ENCODE measurements at regions of chr17 and their contacts with region 1.

Region 1: DNA sequence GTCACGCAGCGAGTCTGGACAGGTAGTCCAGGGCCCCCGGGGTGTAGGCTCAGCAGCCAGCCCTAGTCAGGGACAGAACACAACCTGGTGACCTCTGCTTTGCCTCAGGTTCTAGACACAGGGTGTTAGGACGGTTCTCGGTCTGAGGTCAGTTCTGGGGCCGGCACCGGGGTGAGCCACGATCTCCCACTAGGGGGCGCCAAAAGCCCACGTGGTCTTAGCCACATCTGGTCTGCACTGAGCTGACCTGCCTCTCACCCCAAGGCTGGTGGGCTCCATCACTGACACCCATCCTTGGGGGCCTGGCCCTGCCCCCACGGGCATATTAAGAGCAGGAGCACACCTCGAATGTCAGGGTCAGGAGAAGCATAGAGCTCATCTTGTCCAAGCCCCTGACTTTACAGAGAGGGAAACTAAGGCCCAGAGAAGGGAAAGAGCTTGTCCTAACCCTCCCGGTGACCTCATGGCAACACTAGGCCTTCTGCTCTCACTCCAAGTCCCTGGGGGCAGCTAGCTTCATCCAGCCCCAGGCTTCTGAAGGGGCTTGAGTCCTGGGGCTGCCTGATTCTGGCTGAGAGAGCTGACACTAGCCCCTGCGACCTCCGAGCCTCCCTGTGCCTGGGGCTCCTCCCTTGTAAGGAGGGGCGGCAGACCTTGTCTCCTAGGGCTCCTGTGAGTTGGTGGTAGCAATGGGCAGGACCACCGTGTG is 9.0 kb downstream of the SLC5A10 start:
- DNase-seq: peak; percentile 49 to 64 (median 49)
- H3K4me3 ChIP-seq: no peak overlapping the region
- H3K27ac ChIP-seq: no peak overlapping the region
- H3K4me1 ChIP-seq: peaks cover 0 to 24% (median 16%) of the 10 kb centered on the region in 4 experiments
- H3K27me3 ChIP-seq: no peaks in the 10 kb centered on the region

Region 2: DNA sequence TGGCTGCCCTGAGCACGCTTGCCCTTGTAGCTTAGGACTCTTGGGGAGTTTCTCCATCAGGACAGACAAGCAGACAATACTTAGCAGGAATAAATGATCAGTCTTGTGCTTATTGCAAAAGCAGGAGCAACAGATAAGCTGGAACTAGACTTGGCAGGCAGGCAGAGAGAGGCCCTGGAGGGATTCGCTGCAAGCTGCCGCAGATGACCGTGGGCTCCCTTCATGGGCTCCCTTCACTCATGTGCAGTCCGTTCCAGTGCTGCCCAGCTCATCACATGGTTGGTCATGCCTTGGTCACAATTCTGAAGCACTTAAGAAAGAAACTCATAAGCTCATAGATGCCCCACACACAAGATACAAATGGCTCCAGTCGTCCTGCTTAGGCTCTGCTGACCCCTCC is 11.4 kb before region 1 on chr17:
- CTCF ChIA-PET with region 1: interaction called, 16 read pairs
- POLR2A ChIA-PET with region 1: no interaction called
- DNase-seq: no peak
- H3K4me3 ChIP-seq: no peak overlapping the region
- H3K27ac ChIP-seq: no peak overlapping the region
- H3K4me1 ChIP-seq: peaks cover 0 to 2% (median 0%) of the 10 kb centered on the region in 4 experiments
- H3K27me3 ChIP-seq: no peaks in the 10 kb centered on the region

Region 3: DNA sequence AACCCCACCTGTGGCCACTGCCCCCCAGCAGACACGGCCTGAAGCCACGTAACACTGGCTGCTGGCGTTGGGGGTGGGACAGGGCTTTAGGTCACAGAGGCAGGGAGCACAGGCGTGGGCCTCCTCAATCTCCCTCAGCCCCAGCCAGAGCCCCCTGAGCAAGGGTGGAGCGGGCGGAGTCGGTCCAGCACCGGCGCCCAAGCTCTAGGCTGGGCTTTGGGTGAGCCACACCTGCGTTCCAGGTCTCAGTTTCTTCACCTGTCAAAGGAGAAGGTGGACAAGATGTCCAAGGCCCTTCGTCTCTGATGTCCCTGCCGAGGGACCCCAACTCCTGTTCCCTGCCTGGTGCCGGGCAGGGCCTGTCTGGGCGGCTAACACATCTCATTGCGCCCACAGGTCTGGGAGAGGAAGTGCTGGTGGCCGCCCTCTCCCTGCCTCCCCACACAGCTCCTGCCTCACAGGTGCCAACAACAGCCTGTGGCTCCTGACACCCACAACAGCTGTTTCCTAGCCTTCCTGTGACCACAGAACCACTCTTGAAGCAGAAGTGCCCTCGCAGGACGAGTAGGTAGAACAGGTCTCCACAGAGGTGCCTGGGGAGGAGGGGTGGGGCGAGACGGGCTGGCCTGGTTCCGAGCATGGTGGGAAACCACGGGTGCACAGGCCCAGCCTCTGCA is 31.6 kb after region 1 on chr17:
- CTCF ChIA-PET with region 1: interaction called, 29 read pairs
- POLR2A ChIA-PET with region 1: no interaction called
- DNase-seq: peak; percentile 90 to 99 (median 98)
- H3K4me3 ChIP-seq: peak overlapping the region in 2 of 7 experiments; percentile 33 to 47
- H3K27ac ChIP-seq: no peak overlapping the region
- H3K4me1 ChIP-seq: peaks cover 2 to 41% (median 37%) of the 10 kb centered on the region in 4 experiments
- H3K27me3 ChIP-seq: no peaks in the 10 kb centered on the region

Region 4: DNA sequence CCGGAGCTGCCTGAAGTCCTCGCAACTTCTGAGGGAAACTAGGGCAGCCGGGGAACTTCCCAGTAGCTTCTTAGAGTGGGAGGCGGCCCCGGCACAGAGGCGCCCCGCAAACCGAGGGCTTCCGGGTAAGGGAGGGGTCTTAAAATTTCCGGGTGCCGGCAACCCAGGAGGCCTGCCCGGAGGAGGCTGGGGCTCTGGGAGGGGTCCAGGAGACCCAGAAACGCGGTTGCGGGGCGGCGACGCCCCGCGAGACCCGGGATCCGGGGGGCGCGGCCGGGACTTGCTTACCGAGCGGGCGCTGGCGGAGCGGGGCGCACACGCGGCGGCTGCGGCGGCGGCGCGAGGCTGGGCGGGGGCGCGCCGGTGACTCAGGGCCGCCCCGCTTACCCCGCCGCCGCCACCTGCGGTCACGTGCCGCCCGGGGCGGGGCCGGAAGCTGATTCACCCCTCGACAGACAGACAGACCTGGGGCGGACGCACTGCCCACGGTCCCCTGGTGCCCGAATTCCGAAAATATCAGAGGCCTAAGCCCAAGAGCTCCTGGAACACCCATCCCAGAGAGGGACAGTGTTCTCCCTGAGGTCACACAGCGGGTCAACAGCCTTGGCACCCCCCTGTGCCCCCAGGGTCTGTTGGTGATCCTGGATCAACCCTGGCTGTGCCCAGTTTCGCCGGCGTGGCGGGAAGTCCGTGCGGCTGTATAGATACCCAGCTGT is 43.6 kb after region 1 on chr17 and contains the start of gene FAM83G:
- CTCF ChIA-PET with region 1: interaction called, 29 read pairs
- POLR2A ChIA-PET with region 1: interaction called, 3 read pairs
- DNase-seq: peak; percentile 81 to 89 (median 84)
- H3K4me3 ChIP-seq: peak within 1 kb of the TSS; percentile 16 to 83 (median 66)
- H3K27ac ChIP-seq: peak within 1 kb of the TSS in 1 of 2 experiments; percentile 16
- H3K4me1 ChIP-seq: peaks cover 0 to 42% (median 37%) of the 10 kb centered on the region in 4 experiments
- H3K27me3 ChIP-seq: no peaks in the 10 kb centered on the region

Region 5: DNA sequence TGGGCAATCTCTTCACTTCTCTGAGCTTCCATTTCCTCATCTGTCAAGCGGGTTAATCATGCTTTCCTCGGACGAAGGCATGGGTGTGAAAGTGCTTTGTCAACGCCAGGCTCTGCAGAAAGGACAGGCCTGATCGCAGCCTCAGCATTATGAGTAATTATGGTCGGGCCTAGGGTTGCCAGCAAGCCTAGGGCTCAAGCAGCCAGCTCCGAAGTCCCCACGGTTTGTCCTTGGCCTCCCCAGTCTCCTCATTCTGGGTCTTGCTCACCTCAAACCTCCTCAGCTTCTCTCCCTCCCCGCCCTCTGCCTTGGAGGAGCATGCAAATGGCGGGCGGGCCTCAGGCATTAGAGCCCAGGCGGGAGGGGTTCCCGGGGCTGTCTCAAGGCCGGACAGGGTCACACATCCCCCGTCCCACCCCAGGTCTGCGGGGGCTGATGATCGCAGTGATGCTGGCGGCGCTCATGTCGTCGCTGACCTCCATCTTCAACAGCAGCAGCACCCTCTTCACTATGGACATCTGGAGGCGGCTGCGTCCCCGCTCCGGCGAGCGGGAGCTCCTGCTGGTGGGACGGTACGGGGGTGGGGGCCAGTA is 53.8 kb after region 1 on chr17:
- CTCF ChIA-PET with region 1: interaction called, 12 read pairs
- POLR2A ChIA-PET with region 1: no interaction called
- DNase-seq: no peak
- H3K4me3 ChIP-seq: no peak overlapping the region
- H3K27ac ChIP-seq: no peak overlapping the region
- H3K4me1 ChIP-seq: no peaks in the 10 kb centered on the region
- H3K27me3 ChIP-seq: no peaks in the 10 kb centered on the region

Region 6: GRCh38 chr17:19021622-19022083 is 60.7 kb after region 1 on chr17:
- CTCF ChIA-PET with region 1: interaction called, 11 read pairs
- POLR2A ChIA-PET with region 1: no interaction called
- DNase-seq: no peak
- H3K4me3 ChIP-seq: no peak overlapping the region
- H3K27ac ChIP-seq: no peak overlapping the region
- H3K4me1 ChIP-seq: no peaks in the 10 kb centered on the region
- H3K27me3 ChIP-seq: no peaks in the 10 kb centered on the region

Measured in common myeloid progenitor, CD34-positive (primary cell).